ENCODE measurements at regions of chr2 and their contacts with region 1.

Region 1: DNA sequence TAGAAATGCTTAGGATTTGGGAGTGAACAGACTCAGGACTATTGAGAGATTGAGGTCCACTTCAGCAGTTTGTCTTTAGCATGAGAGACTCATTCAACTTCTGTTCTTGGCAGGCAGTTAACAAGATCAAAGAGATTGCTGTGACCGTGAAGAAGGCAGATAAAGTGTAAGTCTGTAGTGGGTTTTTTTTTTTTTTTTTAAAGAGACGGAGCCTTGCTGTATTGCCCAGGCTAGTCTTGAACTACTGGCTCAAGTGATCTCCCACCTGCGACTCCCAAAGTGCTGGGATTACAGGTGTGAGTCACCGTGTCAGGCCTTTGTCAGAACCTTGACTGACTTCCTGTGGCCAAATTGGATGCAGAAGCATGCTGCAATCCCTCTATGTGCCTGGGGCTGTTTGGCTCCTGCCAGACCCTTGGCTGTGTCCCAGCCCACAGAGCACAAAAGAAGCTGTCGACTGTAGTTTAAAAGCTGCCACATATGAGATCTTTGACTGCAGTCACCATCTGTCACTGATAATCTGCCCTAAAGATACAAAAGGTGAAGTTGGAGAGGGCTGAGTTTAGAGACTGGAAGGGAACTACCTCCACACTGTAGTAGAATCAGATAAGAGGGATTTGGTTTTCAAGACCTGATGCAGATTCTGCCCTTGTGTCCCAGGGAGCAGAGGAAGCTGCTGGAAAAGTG is 9.9 kb downstream of the CCT7 start:
- DNase-seq: no peak
- H3K4me3 ChIP-seq: no peak overlapping the region
- H3K27ac ChIP-seq: no peak overlapping the region
- H3K4me1 ChIP-seq: peaks cover 0 to 2% (median under 1%) of the 10 kb centered on the region in 4 experiments; a peak in 1 of 7 replicates
- H3K27me3 ChIP-seq: no peaks in the 10 kb centered on the region
- CTCF ChIP-seq: no peak
- EP300 ChIP-seq: no peak
- POLR2A ChIP-seq: no peak
- RAD21 ChIP-seq: no peak

Region 2: GRCh38 chr2:73233154-73233931 is 10.7 kb before region 1 on chr2 and contains the start of gene PRADC1:
- CTCF ChIA-PET with region 1: interaction called, 4 read pairs
- POLR2A ChIA-PET with region 1: interaction called, 65 read pairs
- DNase-seq: peak; percentile 94 to 98
- H3K4me3 ChIP-seq: peak within 1 kb of the TSS; percentile 82 to 93 (median 88)
- H3K27ac ChIP-seq: peak within 1 kb of the TSS; percentile 30; the same call in 1 of the 2 replicates
- H3K4me1 ChIP-seq: peaks cover 10 to 16% (median 13%) of the 10 kb centered on the region in 4 experiments; a peak in 6 of 7 replicates
- H3K27me3 ChIP-seq: no peaks in the 10 kb centered on the region; a peak in 2 of 7 replicates
- CTCF ChIP-seq: no peak
- EP300 ChIP-seq: no peak
- POLR2A ChIP-seq: no peak
- RAD21 ChIP-seq: no peak
- total RNA-seq, gene PRADC1: 7.5 and 8.9 TPM in 2 replicates

Region 3: GRCh38 chr2:73260034-73260984 is 16.3 kb after region 1 on chr2:
- CTCF ChIA-PET with region 1: interaction called, 51 read pairs
- POLR2A ChIA-PET with region 1: interaction called, 105 read pairs
- DNase-seq: peak in 1 of 2 experiments; percentile 80
- H3K4me3 ChIP-seq: no peak overlapping the region
- H3K27ac ChIP-seq: no peak overlapping the region
- H3K4me1 ChIP-seq: peaks cover 0 to 6% (median 3%) of the 10 kb centered on the region in 4 experiments; a peak in 3 of 7 replicates
- H3K27me3 ChIP-seq: no peaks in the 10 kb centered on the region
- CTCF ChIP-seq: peak in 2 of 3 experiments; percentile 67 to 77; a peak in 3 of 4 replicates
- EP300 ChIP-seq: no peak
- POLR2A ChIP-seq: peak in 1 of 2 experiments; percentile 28; a peak in 1 of 3 replicates
- RAD21 ChIP-seq: peak; percentile 71 to 81

Region 4: DNA sequence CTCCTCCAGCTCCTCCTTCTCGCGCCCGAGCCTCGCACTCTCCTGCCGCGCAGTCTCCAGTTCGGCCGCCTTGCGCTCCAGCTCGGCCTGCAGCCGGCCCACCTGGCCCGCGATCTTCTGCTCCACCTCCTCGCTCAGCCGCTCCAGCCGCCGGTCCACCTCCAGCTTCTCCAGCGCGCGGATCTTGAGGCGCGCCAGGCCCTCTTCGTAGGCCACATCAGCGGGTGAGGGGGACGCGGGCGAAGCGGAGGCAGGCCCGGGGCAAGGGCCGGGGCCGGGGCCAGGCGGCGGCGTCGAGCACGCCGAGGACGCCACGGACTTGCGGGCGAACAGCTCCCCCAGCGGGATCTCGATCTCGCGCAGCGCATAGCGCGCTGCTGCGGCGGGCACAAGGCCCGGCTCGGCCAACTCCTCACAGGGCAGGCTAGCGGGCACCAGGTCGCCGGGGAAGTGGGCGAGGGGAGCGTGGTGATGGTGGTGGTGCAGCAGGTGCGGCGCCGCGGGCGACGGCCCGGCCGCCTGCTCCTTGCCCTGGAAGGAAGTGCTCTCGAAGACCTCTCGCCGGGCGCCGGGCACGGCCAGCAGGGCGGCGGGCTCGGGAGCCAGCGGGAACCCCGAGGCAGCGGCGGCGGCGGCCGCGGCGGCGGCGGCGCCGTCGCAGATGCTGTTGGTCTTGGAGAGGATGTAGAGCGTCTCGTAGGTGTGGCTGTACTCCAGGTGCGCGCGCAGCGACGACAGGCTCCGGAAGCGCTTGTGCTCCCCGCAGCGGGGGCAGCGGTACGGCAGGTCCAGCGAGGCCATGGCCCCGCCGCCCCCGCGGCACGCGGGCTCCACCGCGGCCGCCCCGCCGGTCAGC is 25.0 kb after region 1 on chr2:
- CTCF ChIA-PET with region 1: interaction called, 3 read pairs
- POLR2A ChIA-PET with region 1: interaction called, 12 read pairs
- DNase-seq: peak; percentile 51 to 85
- H3K4me3 ChIP-seq: peak overlapping the region; percentile 39 to 63 (median 54)
- H3K27ac ChIP-seq: peak overlapping the region; percentile 21; the same call in 1 of the 2 replicates
- H3K4me1 ChIP-seq: peaks cover 0 to 10% (median 6%) of the 10 kb centered on the region in 4 experiments; a peak in 5 of 7 replicates
- H3K27me3 ChIP-seq: peaks cover 0 to 28% (median 23%) of the 10 kb centered on the region in 4 experiments; a peak in 6 of 7 replicates
- CTCF ChIP-seq: peak in 2 of 3 experiments; percentile 10 to 12; a peak in 2 of 4 replicates
- EP300 ChIP-seq: peak in 1 of 2 experiments; percentile 84; a peak in 1 of 3 replicates
- POLR2A ChIP-seq: no peak
- RAD21 ChIP-seq: no peak

Region 5: DNA sequence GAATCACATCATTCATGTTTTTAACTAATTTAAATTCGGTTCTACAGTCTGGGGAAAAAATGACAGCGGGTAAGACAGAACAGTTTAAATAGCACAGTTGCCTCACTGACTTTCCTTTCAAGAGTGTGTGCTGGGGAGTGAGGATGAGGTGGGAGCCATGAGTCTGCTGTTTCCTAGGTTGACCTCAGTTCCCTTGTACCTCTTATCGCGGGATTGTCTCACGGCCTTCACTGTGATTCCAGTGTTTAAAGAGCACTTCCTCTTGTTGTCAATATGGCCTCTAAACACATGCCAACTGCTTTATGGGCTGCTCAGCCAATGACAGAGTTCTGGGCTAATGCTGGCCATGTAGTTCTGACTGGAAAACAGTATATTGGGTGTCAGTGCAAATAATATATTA is 100.0 kb after region 1 on chr2:
- CTCF ChIA-PET with region 1: no interaction called
- POLR2A ChIA-PET with region 1: no interaction called
- DNase-seq: no peak
- H3K4me3 ChIP-seq: no peak overlapping the region
- H3K27ac ChIP-seq: no peak overlapping the region
- H3K4me1 ChIP-seq: no peaks in the 10 kb centered on the region
- H3K27me3 ChIP-seq: no peaks in the 10 kb centered on the region
- CTCF ChIP-seq: no peak
- EP300 ChIP-seq: no peak
- POLR2A ChIP-seq: no peak
- RAD21 ChIP-seq: no peak

Measured in H1 (cell line).